WTC11 (cell line): ENCODE measurements at regions of chr11 and their contacts with region 1.

Region 1: DNA sequence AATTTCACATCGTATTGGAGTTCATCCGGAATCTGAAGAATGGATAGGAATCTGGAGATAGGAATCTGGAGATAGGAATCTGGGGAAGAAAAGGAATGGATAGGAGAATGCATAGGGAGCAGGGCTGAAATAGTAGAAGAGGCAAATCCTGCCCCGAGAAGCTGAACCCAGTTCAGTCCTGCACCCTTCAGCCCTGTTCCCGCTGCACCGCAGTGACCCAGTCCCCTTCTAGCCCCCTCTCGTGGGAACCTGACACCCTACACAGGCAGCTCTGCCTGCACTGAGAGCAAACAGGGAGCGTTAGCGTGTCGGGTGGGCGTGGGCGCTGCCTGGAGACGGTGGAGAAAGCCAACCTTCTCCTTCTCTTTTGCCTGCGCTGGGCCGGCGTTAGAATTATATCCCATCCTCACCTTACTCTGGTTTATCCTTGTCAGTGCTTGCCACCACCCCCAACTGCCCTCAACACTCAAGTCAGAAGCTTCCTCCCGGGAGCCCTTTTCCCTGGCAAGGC is 1.0 kb upstream of the CCKBR start:
- DNase-seq: peak; percentile 36
- ATAC-seq: peak; percentile 40
- H3K4me3 Mint-ChIP-seq: no peak overlapping the region; the same call in none of the 2 replicates
- H3K27ac Mint-ChIP-seq: no peak overlapping the region
- H3K4me1 Mint-ChIP-seq: no peaks in the 10 kb centered on the region
- H3K27me3 Mint-ChIP-seq: no peaks in the 10 kb centered on the region
- CTCF ChIP-seq: no peak

Region 2: GRCh38 chr11:6022956-6023355 is 235.7 kb before region 1 on chr11:
- CTCF ChIA-PET with region 1: interaction called, 11 read pairs
- POLR2A ChIA-PET with region 1: no interaction called
- DNase-seq: no peak
- ATAC-seq: peak; percentile 93
- H3K4me3 Mint-ChIP-seq: no peak overlapping the region
- H3K27ac Mint-ChIP-seq: no peak overlapping the region
- H3K4me1 Mint-ChIP-seq: 0 out of 2 replicates have a peak, but pooled peaks cover 4% of the 10 kb centered on the region
- H3K27me3 Mint-ChIP-seq: peaks cover 26% of the 10 kb centered on the region
- CTCF ChIP-seq: no peak

Region 3: GRCh38 chr11:6269994-6270393 is 11.4 kb after region 1 on chr11:
- CTCF ChIA-PET with region 1: interaction called, 82 read pairs
- POLR2A ChIA-PET with region 1: no interaction called
- DNase-seq: peak; percentile 59
- ATAC-seq: peak; percentile 38
- H3K4me3 Mint-ChIP-seq: no peak overlapping the region
- H3K27ac Mint-ChIP-seq: no peak overlapping the region
- H3K4me1 Mint-ChIP-seq: peaks cover 7% of the 10 kb centered on the region; the same call in 1 of the 2 replicates
- H3K27me3 Mint-ChIP-seq: peaks cover 30% of the 10 kb centered on the region
- CTCF ChIP-seq: peak; percentile 60; the same call in 1 of the 2 replicates

Region 4: DNA sequence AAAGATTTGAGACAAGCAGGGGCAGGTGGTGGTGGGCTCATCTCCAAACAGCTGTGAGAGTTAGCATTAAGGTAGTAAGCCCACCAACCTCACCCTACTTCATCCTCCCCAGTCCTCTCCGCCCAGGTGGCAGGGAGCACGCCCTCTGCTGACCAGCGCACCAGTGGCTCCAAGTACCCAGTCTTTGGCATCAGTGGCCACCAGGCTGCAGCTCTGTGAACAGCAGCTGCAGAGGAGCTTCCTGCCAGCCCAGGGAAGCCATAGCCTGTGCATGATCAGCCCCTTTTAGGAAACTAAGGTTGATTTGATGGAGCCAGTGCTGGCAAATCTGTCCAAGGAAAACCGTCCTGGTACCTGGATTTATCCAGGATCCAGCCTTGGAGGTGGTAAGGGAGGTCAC is 40.0 kb after region 1 on chr11:
- CTCF ChIA-PET with region 1: interaction called, 32 read pairs
- POLR2A ChIA-PET with region 1: no interaction called
- DNase-seq: peak; percentile 86
- ATAC-seq: peak; percentile 96
- H3K4me3 Mint-ChIP-seq: no peak overlapping the region
- H3K27ac Mint-ChIP-seq: peak overlapping the region; percentile 40; the same call in 1 of the 2 replicates
- H3K4me1 Mint-ChIP-seq: peaks cover 57% of the 10 kb centered on the region
- H3K27me3 Mint-ChIP-seq: no peaks in the 10 kb centered on the region
- CTCF ChIP-seq: peak; percentile 52; the same call in 1 of the 2 replicates

Region 5: GRCh38 chr11:6321961-6322362 is 63.3 kb after region 1 on chr11:
- CTCF ChIA-PET with region 1: interaction called, 22 read pairs
- POLR2A ChIA-PET with region 1: interaction called, 9 read pairs
- DNase-seq: no peak
- ATAC-seq: no peak
- H3K4me3 Mint-ChIP-seq: peak overlapping the region; percentile 41
- H3K27ac Mint-ChIP-seq: peak overlapping the region; percentile 96
- H3K4me1 Mint-ChIP-seq: peaks cover 71% of the 10 kb centered on the region
- H3K27me3 Mint-ChIP-seq: peaks cover 16% of the 10 kb centered on the region
- CTCF ChIP-seq: no peak

Region 6: GRCh38 chr11:6371825-6372224 is 113.2 kb after region 1 on chr11:
- CTCF ChIA-PET with region 1: no interaction called
- POLR2A ChIA-PET with region 1: no interaction called
- DNase-seq: no peak
- ATAC-seq: peak; percentile 48; the same call in 1 of the 2 replicates
- H3K4me3 Mint-ChIP-seq: no peak overlapping the region
- H3K27ac Mint-ChIP-seq: no peak overlapping the region
- H3K4me1 Mint-ChIP-seq: peaks cover 4% of the 10 kb centered on the region
- H3K27me3 Mint-ChIP-seq: no peaks in the 10 kb centered on the region
- CTCF ChIP-seq: no peak

Region 7: GRCh38 chr11:6619004-6619745 is 360.5 kb after region 1 on chr11 and contains the start of gene TPP1:
- CTCF ChIA-PET with region 1: no interaction called
- POLR2A ChIA-PET with region 1: no interaction called
- DNase-seq: peak; percentile 92
- ATAC-seq: peak; percentile 99
- H3K4me3 Mint-ChIP-seq: no peak within 1 kb of the TSS
- H3K27ac Mint-ChIP-seq: no peak within 1 kb of the TSS
- H3K4me1 Mint-ChIP-seq: no peaks in the 10 kb centered on the region
- H3K27me3 Mint-ChIP-seq: no peaks in the 10 kb centered on the region
- CTCF ChIP-seq: no peak
- total RNA-seq, gene TPP1: 36.2 to 51.4 TPM (median 44.8 TPM) in 3 replicates